ENCODE measurements at regions of chr9 and their contacts with region 1.

Region 1: GRCh38 chr9:20209391-20210340 is 412.6 kb downstream of the MLLT3 start:
- DNase-seq: peak in 8 of 9 donors; percentile 49 to 78 (median 71)
- ATAC-seq: peak; percentile 86
- H3K4me3 ChIP-seq: no peak overlapping the region
- H3K4me3 Mint-ChIP-seq: peak overlapping the region; percentile 58 to 92 (median 70)
- H3K27ac ChIP-seq: no peak overlapping the region
- H3K27ac Mint-ChIP-seq: peak overlapping the region; percentile 65 to 94 (median 85)
- H3K4me1 ChIP-seq: peaks cover 17 to 30% of the 10 kb centered on the region in 2 donors
- H3K4me1 Mint-ChIP-seq: peaks cover 31 to 46% (median 41%) of the 10 kb centered on the region in 7 donors
- H3K27me3 ChIP-seq: no peaks in the 10 kb centered on the region
- H3K27me3 Mint-ChIP-seq: no peaks in the 10 kb centered on the region

Region 2: DNA sequence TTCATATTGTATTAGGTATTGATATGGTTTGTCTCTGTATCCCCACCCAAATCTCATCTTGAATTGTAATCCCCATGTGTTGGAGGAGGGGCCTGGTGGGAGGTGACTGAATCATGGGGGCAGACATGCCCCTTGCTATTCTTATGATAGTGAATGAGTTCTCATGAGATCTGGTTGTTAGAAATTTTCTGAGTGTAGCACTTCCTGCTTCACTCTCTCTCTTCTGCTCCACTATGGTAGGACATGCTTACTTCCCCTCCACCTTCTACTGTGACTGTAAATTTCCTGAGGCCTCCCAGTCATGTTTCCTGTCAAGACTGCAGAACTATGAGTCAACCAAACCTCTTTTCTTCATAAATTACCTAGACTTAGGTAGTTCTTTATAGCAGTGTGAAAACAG is 233.4 kb before region 1 on chr9:
- CTCF ChIA-PET with region 1: no interaction called
- POLR2A ChIA-PET with region 1: no interaction called
- intact Hi-C with region 1: loop called in 1 of 2 experiments (anchors 5 kb)
- DNase-seq: peak in 8 of 9 donors; percentile 20 to 58 (median 39)
- ATAC-seq: peak; percentile 63
- H3K4me3 ChIP-seq: no peak overlapping the region
- H3K4me3 Mint-ChIP-seq: peak overlapping the region in 7 of 10 donors; percentile 1 to 69 (median 42)
- H3K27ac ChIP-seq: no peak overlapping the region
- H3K27ac Mint-ChIP-seq: peak overlapping the region; percentile 5 to 89 (median 79)
- H3K4me1 ChIP-seq: peaks cover 0 to 14% of the 10 kb centered on the region in 2 donors
- H3K4me1 Mint-ChIP-seq: peaks cover 7 to 30% (median 29%) of the 10 kb centered on the region in 7 donors
- H3K27me3 ChIP-seq: no peaks in the 10 kb centered on the region
- H3K27me3 Mint-ChIP-seq: no peaks in the 10 kb centered on the region

Region 3: GRCh38 chr9:19999491-20000057 is 210.1 kb before region 1 on chr9:
- CTCF ChIA-PET with region 1: no interaction called
- POLR2A ChIA-PET with region 1: no interaction called
- intact Hi-C with region 1: loop called in 1 of 2 experiments (anchors 1 kb)
- DNase-seq: peak in 1 of 9 donors; percentile 61
- ATAC-seq: peak; percentile 37
- H3K4me3 ChIP-seq: no peak overlapping the region
- H3K4me3 Mint-ChIP-seq: peak overlapping the region in 1 of 10 donors; percentile 59
- H3K27ac ChIP-seq: no peak overlapping the region
- H3K27ac Mint-ChIP-seq: peak overlapping the region in 3 of 9 donors; percentile 30 to 93 (median 39)
- H3K4me1 ChIP-seq: peaks cover 0 to 11% of the 10 kb centered on the region in 2 donors
- H3K4me1 Mint-ChIP-seq: peaks cover 0 to 51% (median 8%) of the 10 kb centered on the region in 7 donors
- H3K27me3 ChIP-seq: no peaks in the 10 kb centered on the region
- H3K27me3 Mint-ChIP-seq: no peaks in the 10 kb centered on the region

Region 4: DNA sequence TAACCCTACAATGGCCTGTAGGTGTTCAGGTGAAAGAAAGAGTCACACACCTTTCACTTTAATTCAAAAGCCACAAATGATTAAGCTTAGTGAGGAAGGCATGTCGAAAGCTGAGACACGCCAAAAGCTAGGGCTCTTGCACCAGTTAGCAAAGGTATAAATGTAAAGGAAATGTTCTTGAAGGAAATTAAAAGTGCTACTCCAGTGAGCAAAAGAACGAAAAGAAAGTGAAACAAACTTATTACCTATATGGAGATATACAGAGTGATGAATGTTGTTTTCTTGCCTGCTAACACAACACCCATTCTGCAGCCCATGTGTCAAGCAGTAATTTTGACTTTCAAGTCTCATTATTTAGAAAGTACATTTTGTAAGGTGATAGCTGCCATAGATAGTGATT is 166.6 kb before region 1 on chr9:
- CTCF ChIA-PET with region 1: no interaction called
- POLR2A ChIA-PET with region 1: interaction called, 3 read pairs
- intact Hi-C with region 1: loop called in 1 of 2 experiments (anchors 5 kb)
- DNase-seq: peak in 6 of 9 donors; percentile 6 to 46 (median 34)
- ATAC-seq: peak; percentile 59
- H3K4me3 ChIP-seq: peak overlapping the region; percentile 28
- H3K4me3 Mint-ChIP-seq: peak overlapping the region; percentile 61 to 85 (median 80)
- H3K27ac ChIP-seq: peak overlapping the region; percentile 17
- H3K27ac Mint-ChIP-seq: peak overlapping the region; percentile 84 to 95 (median 91)
- H3K4me1 ChIP-seq: peaks cover 0 to 12% of the 10 kb centered on the region in 2 donors
- H3K4me1 Mint-ChIP-seq: peaks cover 9 to 43% (median 27%) of the 10 kb centered on the region in 7 donors
- H3K27me3 ChIP-seq: no peaks in the 10 kb centered on the region
- H3K27me3 Mint-ChIP-seq: no peaks in the 10 kb centered on the region

Region 5: GRCh38 chr9:20197976-20198685 is 11.5 kb before region 1 on chr9:
- CTCF ChIA-PET with region 1: interaction called, 3 read pairs
- POLR2A ChIA-PET with region 1: interaction called, 3 read pairs
- intact Hi-C with region 1: loop called in 1 of 2 experiments (anchors 1 kb)
- DNase-seq: peak in 3 of 9 donors; percentile 3 to 27 (median 5)
- ATAC-seq: no peak
- H3K4me3 ChIP-seq: no peak overlapping the region
- H3K4me3 Mint-ChIP-seq: peak overlapping the region in 3 of 10 donors; percentile 6 to 59 (median 51)
- H3K27ac ChIP-seq: no peak overlapping the region
- H3K27ac Mint-ChIP-seq: peak overlapping the region in 4 of 9 donors; percentile 17 to 54 (median 26)
- H3K4me1 ChIP-seq: peaks cover 0 to 17% of the 10 kb centered on the region in 2 donors
- H3K4me1 Mint-ChIP-seq: peaks cover 10 to 39% (median 32%) of the 10 kb centered on the region in 7 donors
- H3K27me3 ChIP-seq: no peaks in the 10 kb centered on the region
- H3K27me3 Mint-ChIP-seq: no peaks in the 10 kb centered on the region

Region 6: DNA sequence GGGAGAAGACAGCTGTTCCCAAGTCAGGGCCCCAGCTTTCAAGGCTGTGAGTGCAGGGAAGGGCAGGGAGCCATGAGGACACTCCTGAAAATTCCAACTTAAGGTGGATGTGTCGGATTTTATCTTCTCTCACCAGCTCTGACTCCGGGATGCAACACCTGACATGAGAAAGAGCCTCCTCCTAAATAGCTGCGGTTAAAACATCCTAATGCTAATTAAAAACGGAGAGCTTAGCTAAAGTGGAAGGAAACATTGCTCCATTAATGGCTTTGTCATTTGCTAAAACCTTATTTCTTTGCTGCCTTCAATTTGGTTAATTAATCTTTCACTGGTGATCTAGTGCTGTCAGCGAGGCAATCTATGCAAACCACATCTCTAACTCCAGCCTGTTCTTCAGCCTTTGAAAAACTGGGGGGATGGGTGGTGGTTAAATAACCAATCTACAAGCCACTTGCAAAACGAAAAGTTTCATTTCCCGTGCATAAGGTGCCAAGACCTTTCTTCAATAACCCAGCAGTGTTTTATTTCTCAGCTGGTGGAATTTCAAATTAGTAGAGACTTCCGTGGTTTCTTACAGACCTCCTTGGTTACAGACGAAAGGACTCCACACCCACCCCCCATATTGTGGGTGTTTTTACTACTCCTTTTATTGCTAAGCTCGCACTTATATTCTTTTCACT is 33.0 kb after region 1 on chr9:
- CTCF ChIA-PET with region 1: no interaction called
- POLR2A ChIA-PET with region 1: interaction called, 5 read pairs
- intact Hi-C with region 1: loop called (anchors 1 to 5 kb)
- DNase-seq: peak in 8 of 9 donors; percentile 33 to 82 (median 76)
- ATAC-seq: peak; percentile 86
- H3K4me3 ChIP-seq: peak overlapping the region; percentile 42
- H3K4me3 Mint-ChIP-seq: peak overlapping the region; percentile 51 to 89 (median 83)
- H3K27ac ChIP-seq: peak overlapping the region; percentile 1
- H3K27ac Mint-ChIP-seq: peak overlapping the region; percentile 39 to 90 (median 74)
- H3K4me1 ChIP-seq: peaks cover 18 to 32% of the 10 kb centered on the region in 2 donors
- H3K4me1 Mint-ChIP-seq: peaks cover 38 to 84% (median 72%) of the 10 kb centered on the region in 7 donors
- H3K27me3 ChIP-seq: no peaks in the 10 kb centered on the region
- H3K27me3 Mint-ChIP-seq: no peaks in the 10 kb centered on the region